ENCODE measurements at regions of chr19 and their contacts with region 1.

Region 1: DNA sequence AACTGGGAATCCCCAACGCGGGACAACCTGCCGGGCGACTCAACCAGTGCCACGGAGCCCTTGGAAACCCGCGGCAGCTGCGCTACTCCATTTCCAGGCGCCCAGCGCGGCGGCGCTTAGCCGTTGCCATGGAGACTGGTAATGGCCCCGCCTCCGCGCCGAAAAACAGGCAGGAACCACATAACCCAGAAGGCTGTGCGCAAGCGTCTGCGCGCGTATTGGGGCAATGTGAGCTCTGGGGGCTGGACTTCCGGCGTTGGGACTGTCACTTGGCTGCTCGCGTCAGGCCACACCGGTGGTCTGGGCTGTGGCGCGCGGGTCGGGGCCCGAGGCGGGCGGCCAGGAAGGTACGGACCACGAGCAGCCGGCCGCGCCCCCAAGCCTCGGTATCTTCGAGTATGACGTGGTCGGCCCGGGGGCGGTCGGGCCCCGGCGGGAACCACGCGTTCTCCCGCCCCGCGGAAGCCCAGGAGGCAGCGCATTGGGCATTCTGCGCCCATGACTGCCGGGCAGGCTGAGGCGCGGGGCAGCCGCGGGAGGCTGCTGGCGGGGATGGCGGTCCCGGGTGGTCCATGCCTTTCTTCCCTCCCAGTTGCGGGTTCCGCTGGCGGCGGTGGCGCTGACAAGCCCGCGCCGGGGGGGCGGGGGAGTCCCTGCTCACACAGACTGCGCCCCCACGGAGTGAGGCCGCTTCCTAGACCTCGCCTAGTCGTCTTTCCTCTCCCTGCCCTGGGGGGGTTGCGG is at the start of gene ZNF324B:
- DNase-seq: peak; percentile 99
- H3K4me3 Mint-ChIP-seq: peak within 1 kb of the TSS; percentile 90
- H3K27ac Mint-ChIP-seq: peak within 1 kb of the TSS; percentile 53
- H3K4me1 Mint-ChIP-seq: peaks cover 21% of the 10 kb centered on the region
- H3K27me3 Mint-ChIP-seq: peaks cover 6% of the 10 kb centered on the region
- total RNA-seq, gene ZNF324B: 14.4 and 15.2 TPM in 2 replicates

Region 2: DNA sequence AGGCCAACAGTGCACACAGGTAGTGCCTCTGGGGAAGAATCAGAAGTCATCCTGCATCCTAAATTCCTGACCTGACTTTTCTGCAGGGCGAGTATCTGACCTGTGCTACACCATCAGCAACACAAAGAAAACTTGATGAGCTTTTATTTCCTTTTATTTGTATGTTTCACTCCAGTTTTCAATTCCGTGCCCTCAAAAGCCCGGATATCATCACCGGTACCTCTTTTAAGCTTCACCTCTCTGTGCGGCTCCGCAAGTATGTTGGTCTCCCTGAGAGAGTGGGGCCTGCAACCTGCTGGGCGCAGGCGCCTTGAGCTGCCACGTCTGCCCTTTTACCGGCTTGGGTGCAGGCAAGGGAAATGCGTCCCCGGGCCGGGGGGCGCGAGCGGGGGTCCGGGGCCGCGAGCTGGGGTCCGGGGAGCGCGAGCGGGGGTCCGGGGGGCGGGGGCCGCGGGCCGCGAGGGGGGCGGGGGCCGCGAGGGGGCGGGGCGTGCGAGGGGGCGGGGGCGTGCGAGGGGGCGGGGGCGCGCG is 1279.9 kb before region 1 on chr19:
- intact Hi-C with region 1: no loop called
- DNase-seq: peak; percentile 56
- H3K4me3 Mint-ChIP-seq: peak overlapping the region; percentile 52
- H3K27ac Mint-ChIP-seq: no peak overlapping the region
- H3K4me1 Mint-ChIP-seq: no peaks in the 10 kb centered on the region
- H3K27me3 Mint-ChIP-seq: no peaks in the 10 kb centered on the region

Region 3: DNA sequence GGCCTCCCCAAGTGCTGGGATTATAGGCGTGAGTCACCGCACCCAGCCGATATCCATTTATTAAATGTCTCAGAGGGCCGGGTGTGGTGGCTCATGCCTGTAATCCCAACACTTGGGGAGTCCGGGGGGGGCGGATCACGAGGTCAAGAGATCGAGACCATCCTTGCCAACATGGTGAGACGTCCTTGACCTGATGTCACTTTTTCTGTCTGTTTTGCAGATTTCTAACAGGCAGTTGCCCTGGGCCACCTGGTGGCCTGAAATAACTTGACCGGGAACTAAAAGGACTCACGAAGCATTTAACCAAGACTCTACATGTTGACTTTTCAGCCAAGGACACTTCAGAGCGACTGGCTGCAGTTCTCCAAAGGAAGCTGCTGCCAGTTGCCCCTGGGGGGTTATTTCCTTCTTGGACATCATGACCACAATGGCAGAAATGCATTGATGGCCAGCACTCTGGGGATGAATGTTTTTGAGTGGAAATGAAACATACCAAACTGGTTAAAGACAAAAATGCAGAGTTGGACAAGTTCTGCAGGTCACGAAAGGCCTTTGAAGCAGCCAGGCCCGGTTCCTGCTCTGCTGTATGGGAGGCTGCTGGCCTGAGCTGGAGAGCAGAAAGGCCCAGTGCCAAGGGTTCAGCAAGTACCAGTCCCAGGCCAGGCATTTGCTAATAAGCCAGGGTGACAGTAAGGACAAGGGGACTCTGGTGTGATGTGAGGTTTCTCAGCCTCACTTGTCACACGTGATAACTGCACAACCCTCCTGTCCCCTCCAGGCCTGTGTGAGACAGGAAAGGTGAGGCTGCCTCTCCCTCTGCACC is 79.0 kb before region 1 on chr19:
- intact Hi-C with region 1: no loop called
- DNase-seq: no peak
- H3K4me3 Mint-ChIP-seq: no peak overlapping the region
- H3K27ac Mint-ChIP-seq: no peak overlapping the region
- H3K4me1 Mint-ChIP-seq: peaks cover 2% of the 10 kb centered on the region
- H3K27me3 Mint-ChIP-seq: no peaks in the 10 kb centered on the region

Region 4: DNA sequence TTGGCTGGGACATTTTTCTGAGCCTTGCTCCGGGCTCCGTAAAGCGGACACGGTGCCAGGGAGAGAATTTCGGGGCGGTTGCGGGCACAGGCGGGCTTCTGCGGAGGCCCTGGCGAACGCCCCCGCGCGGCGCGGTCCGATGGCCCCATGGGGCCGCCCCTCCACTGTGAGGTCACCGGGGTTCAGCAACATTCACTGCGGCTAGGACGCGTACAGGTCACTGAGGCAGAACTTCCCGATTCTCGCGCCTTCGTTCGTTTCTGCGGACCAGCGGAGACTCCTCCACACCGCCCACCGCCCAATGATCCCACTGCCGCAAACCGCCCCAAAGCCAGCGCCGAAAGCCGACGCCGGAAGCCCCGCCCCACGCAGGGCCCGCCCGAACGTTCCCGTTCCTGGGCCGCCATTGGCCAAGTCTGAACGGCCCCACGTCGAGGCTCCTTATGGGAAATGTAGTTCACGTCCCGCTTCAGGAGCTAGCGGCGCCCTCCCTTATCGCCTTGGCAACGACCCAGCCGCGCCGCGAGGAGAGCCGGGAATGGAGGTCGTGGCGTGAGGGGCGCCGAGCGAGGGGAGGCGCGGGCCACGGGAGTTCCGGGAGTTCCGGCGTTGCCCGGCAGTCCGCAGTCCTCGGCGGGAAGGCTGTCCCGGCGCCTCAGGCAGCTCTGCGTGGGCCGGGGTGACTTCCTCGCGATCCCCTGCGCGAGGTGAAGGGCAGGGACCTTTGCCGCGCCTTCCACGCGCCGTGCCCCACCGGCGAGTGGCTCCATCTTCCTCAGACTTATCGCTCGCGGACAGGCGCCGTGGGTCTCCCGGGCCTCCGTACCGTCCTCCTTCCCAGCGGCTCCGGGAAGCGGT is 43.1 kb before region 1 on chr19 and contains the start of gene ZNF584:
- intact Hi-C with region 1: loop called (anchors 2 kb)
- DNase-seq: peak; percentile 98
- H3K4me3 Mint-ChIP-seq: peak within 1 kb of the TSS; percentile 88
- H3K27ac Mint-ChIP-seq: peak within 1 kb of the TSS; percentile 92
- H3K4me1 Mint-ChIP-seq: peaks cover 32% of the 10 kb centered on the region
- H3K27me3 Mint-ChIP-seq: no peaks in the 10 kb centered on the region
- total RNA-seq, gene ZNF584: 17.4 and 17.7 TPM in 2 replicates

Region 5: GRCh38 chr19:58439576-58440554 is 11.7 kb before region 1 on chr19 and contains the start of gene ZNF132:
- intact Hi-C with region 1: loop called (anchors 1 kb)
- DNase-seq: peak; percentile 98
- H3K4me3 Mint-ChIP-seq: peak within 1 kb of the TSS; percentile 97
- H3K27ac Mint-ChIP-seq: peak within 1 kb of the TSS; percentile 97
- H3K4me1 Mint-ChIP-seq: peaks cover 21% of the 10 kb centered on the region
- H3K27me3 Mint-ChIP-seq: no peaks in the 10 kb centered on the region
- total RNA-seq, gene ZNF132: 3.6 and 3.8 TPM in 2 replicates

Region 6: DNA sequence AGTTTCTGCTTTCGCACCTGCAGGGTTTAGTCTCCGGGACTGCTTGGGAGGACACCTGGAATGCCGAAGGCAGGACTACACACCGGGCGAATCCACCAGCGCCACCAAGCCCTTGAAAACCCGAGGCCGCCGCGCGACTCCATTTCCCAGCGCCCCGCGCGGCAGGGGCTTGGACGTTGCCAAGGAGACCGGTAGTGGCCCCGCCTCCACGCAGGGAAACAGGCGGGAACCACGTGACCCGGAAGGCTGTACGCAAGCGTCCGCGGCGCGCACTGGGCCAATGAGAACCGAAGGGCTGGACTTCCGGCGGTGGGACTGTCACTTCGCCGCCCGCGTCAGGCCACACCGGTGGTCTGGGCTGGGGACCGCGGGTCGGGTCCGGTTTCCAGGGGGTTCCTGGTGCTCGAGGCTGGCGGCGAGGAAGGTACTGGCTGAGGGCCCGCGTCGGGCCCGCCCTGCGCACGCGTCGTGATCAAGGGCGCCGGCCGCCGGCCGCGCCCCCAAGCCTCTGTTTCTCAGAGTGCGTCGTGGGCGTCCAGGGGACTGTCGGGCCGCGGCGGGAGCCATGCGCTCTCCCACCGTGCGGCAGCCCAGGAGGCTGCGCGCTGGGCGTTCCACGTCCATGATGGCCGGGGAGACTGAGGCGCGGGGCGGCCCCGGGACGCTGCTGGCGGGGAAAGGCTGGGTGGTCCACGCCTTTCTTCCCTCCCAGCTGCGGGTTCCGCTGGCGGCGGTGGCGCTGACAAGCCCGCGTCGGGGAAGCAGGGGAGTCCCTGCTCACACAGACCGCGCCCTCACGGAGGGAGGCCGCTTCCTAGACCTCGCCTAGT is 15.4 kb after region 1 on chr19 and contains the start of gene ZNF324:
- intact Hi-C with region 1: loop called (anchors 1 kb)
- DNase-seq: peak; percentile 100
- H3K4me3 Mint-ChIP-seq: peak within 1 kb of the TSS; percentile 89
- H3K27ac Mint-ChIP-seq: peak within 1 kb of the TSS; percentile 84
- H3K4me1 Mint-ChIP-seq: peaks cover 15% of the 10 kb centered on the region
- H3K27me3 Mint-ChIP-seq: peaks cover 2% of the 10 kb centered on the region
- total RNA-seq, gene ZNF324: 13.6 and 14.7 TPM in 2 replicates

Measured in activated CD4-positive, alpha-beta T cell treated with anti-CD3 and anti-CD28 coated beads, Interleukin-2, amount 10 ng/mL, durations not matched to agents 24 days and 14 days (primary cell).